PC-3 (cell line): ENCODE measurements at regions of chr3 and their contacts with region 1.

Region 1: GRCh38 chr3:58008140-58009025 is at the start of gene FLNB:
- DNase-seq: peak; percentile 79
- ATAC-seq: peak; percentile 38
- H3K4me3 ChIP-seq: peak within 1 kb of the TSS; percentile 96
- H3K27ac ChIP-seq: peak within 1 kb of the TSS; percentile 66
- H3K4me1 ChIP-seq: peaks cover 56% of the 10 kb centered on the region
- H3K27me3 ChIP-seq: no peaks in the 10 kb centered on the region
- CTCF ChIP-seq: peak; percentile 72
- total RNA-seq, gene FLNB: 505 and 546 TPM in 2 replicates

Region 2: DNA sequence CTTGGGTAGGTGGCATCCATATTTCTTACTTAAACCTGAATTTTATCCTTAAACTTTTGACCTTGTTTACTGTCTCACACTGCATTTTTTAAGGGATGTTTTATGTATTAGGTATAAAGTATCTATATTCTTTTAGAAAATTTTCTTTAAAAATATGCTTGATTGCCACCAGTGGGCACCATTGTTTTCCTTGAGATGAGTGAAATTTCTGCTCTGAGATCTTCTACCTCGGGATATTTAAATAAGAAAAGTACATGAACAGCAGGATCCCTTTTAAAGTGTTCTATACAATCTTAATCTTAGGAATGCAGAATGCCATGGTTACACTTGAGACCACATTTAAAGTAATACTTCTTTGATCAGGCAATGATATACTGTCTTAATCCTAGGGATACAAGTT is 143.5 kb before region 1 on chr3:
- CTCF ChIA-PET with region 1: no interaction called
- POLR2A ChIA-PET with region 1: no interaction called
- intact Hi-C with region 1: loop called (anchors 10 kb)
- DNase-seq: peak; percentile 41
- ATAC-seq: no peak; the same call in 1 of the 2 replicates
- H3K4me3 ChIP-seq: no peak overlapping the region
- H3K27ac ChIP-seq: no peak overlapping the region
- H3K4me1 ChIP-seq: no peaks in the 10 kb centered on the region
- H3K27me3 ChIP-seq: no peaks in the 10 kb centered on the region
- CTCF ChIP-seq: peak; percentile 58

Region 3: GRCh38 chr3:57961828-57962447 is 46.4 kb before region 1 on chr3:
- CTCF ChIA-PET with region 1: interaction called, 5 read pairs
- POLR2A ChIA-PET with region 1: no interaction called
- intact Hi-C with region 1: loop called (anchors 1 kb)
- DNase-seq: peak; percentile 81
- ATAC-seq: peak; percentile 69
- H3K4me3 ChIP-seq: no peak overlapping the region
- H3K27ac ChIP-seq: 0 out of 2 replicates have a peak overlapping the region, but pooled peaks have one; percentile 0
- H3K4me1 ChIP-seq: peaks cover 22% of the 10 kb centered on the region
- H3K27me3 ChIP-seq: no peaks in the 10 kb centered on the region
- CTCF ChIP-seq: peak; percentile 85

Region 4: GRCh38 chr3:57974796-57975388 is 33.5 kb before region 1 on chr3:
- CTCF ChIA-PET with region 1: interaction called, 6 read pairs
- POLR2A ChIA-PET with region 1: interaction called, 7 read pairs
- intact Hi-C with region 1: loop called (anchors 1 kb)
- DNase-seq: peak; percentile 98
- ATAC-seq: peak; percentile 36
- H3K4me3 ChIP-seq: no peak overlapping the region
- H3K27ac ChIP-seq: peak overlapping the region; percentile 95
- H3K4me1 ChIP-seq: peaks cover 82% of the 10 kb centered on the region
- H3K27me3 ChIP-seq: no peaks in the 10 kb centered on the region
- CTCF ChIP-seq: no peak

Region 5: GRCh38 chr3:58025837-58026569 is 17.6 kb after region 1 on chr3:
- CTCF ChIA-PET with region 1: interaction called, 3 read pairs
- POLR2A ChIA-PET with region 1: interaction called, 7 read pairs
- intact Hi-C with region 1: loop called (anchors 2 kb)
- DNase-seq: peak; percentile 70
- ATAC-seq: peak; percentile 36
- H3K4me3 ChIP-seq: peak overlapping the region; percentile 8; the same call in 1 of the 2 replicates
- H3K27ac ChIP-seq: peak overlapping the region; percentile 82
- H3K4me1 ChIP-seq: peaks cover 66% of the 10 kb centered on the region
- H3K27me3 ChIP-seq: no peaks in the 10 kb centered on the region
- CTCF ChIP-seq: no peak

Region 6: DNA sequence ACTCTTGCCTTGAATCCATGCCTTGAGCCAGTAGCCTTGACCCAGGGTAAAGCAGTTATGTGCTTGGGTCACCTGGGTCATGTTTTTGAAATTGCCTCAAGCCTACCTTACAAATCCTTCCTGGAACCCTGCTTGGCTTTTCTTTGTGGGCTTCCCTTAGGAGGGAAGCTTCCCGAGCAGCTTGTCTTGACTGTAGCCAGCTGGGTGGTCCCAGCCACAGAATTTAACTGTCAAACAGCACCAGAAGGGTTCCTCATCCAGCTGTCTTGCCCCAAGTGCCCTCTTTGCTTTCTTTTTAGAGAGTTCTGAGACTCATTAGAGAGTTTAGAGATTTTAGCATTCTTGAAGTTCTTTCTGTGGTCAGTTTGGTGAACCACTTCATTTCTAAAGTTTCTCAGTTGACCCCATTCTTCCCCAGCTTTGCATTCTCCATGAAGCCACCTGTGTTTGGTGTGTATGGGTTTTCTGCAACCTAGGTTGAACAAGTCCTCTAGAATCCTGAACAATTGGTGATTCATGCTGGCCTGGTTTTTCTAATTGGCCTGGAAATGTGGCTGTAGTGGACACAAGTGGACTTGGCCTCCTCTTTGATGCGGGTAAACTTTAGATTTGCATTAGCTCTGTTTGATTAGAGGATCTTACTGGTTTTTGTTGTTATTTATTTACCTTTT is 33.4 kb after region 1 on chr3:
- CTCF ChIA-PET with region 1: no interaction called
- POLR2A ChIA-PET with region 1: interaction called, 5 read pairs
- intact Hi-C with region 1: loop called (anchors 1 kb)
- DNase-seq: peak; percentile 31
- ATAC-seq: no peak
- H3K4me3 ChIP-seq: no peak overlapping the region
- H3K27ac ChIP-seq: peak overlapping the region; percentile 44
- H3K4me1 ChIP-seq: peaks cover 74% of the 10 kb centered on the region
- H3K27me3 ChIP-seq: no peaks in the 10 kb centered on the region
- CTCF ChIP-seq: no peak

Region 7: GRCh38 chr3:58161435-58162398 is 153.3 kb after region 1 on chr3:
- CTCF ChIA-PET with region 1: no interaction called
- POLR2A ChIA-PET with region 1: interaction called, 4 read pairs
- intact Hi-C with region 1: loop called (anchors 5 kb)
- DNase-seq: peak; percentile 99
- ATAC-seq: peak; percentile 40
- H3K4me3 ChIP-seq: no peak overlapping the region
- H3K27ac ChIP-seq: peak overlapping the region; percentile 92
- H3K4me1 ChIP-seq: peaks cover 50% of the 10 kb centered on the region
- H3K27me3 ChIP-seq: no peaks in the 10 kb centered on the region
- CTCF ChIP-seq: no peak